ENCODE measurements at regions of chr9 and their contacts with region 1.

Region 1: GRCh38 chr9:99488734-99489413 is 266.8 kb downstream of the SEC61B start:
- DNase-seq: peak; percentile 14
- H3K4me3 ChIP-seq: no peak overlapping the region
- H3K27ac ChIP-seq: no peak overlapping the region
- H3K4me1 ChIP-seq: no peaks in the 10 kb centered on the region
- H3K27me3 ChIP-seq: peaks cover 2% of the 10 kb centered on the region
- CTCF ChIP-seq: no peak

Region 2: DNA sequence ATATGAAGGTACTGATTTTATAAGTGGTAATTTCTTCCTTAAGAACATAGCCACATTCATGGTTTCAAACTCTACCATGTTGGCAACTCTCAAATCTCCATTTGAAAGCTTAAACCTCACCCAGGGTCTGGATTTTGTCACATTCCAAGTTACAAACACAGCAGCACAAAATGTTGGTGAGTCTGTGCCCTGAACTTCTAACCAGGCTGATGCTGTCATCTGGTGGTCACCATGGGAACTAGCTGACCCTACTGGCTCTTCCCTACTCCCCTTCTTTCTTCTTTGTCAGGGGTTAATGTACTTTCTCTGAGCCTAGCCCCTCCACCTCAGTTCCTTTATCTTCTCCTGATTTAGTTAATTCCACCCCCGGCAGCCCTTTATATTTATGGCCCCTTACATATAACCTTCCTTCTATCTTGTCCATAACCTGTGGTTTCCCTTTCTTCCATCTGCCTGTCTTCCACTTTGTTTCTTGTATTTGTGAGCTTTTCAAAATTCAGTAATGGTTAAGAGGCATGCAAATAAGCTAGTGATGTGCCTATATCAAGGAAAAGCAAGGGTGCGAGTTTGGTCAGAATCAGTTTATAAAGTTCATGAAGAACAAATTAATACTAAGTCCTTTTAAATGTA is 348.1 kb before region 1 on chr9:
- CTCF ChIA-PET with region 1: no interaction called
- dilution Hi-C with region 1: no loop called
- in situ Hi-C with region 1: no loop called
- intact Hi-C with region 1: no loop called
- DNase-seq: peak; percentile 16
- H3K4me3 ChIP-seq: no peak overlapping the region
- H3K27ac ChIP-seq: no peak overlapping the region
- H3K4me1 ChIP-seq: no peaks in the 10 kb centered on the region
- H3K27me3 ChIP-seq: no peaks in the 10 kb centered on the region
- CTCF ChIP-seq: peak; percentile 92 to 95

Region 3: GRCh38 chr9:99523838-99524237 is 35.0 kb after region 1 on chr9:
- CTCF ChIA-PET with region 1: no interaction called
- dilution Hi-C with region 1: loop called (anchors 5 kb)
- in situ Hi-C with region 1: no loop called
- intact Hi-C with region 1: no loop called
- DNase-seq: no peak
- H3K4me3 ChIP-seq: no peak overlapping the region
- H3K27ac ChIP-seq: no peak overlapping the region
- H3K4me1 ChIP-seq: no peaks in the 10 kb centered on the region
- H3K27me3 ChIP-seq: no peaks in the 10 kb centered on the region
- CTCF ChIP-seq: no peak

Measured in mammary epithelial cell (primary cell).